ENCODE measurements at regions of chr1 and their contacts with region 1.

Region 1: DNA sequence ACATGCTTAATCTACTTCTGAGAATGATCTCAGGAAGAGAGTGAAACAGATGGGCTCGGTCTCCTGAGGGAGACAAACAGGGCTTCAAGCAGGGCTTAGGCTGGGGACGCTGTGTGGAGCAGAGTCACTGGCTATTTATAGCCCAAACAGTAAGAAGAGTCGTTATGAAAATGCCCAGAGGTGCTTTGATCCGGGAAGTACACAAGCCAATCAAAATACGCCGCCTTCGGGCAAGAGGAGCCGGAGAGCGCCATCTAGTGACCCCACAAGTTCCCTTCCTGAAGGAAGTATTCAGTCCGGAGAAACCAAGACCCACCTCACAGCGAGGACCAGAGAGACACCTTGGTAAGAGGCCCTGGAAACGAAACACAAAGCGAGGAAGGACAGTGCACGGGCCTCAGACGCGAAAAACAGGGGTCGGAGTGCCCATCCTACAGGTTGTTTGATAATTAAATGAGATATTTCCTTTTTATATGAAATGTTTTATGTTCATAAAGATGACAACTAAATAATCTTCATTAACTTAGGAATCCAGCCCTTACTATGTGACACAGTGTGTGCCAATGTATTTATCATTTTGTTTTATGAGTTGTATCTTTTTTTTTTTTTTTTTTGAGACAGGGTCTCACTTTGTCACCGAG is 25.0 kb upstream of the SCCPDH start:
- DNase-seq: peak; percentile 62
- ATAC-seq: peak; percentile 90
- H3K4me3 Mint-ChIP-seq: peak overlapping the region; percentile 74
- H3K27ac Mint-ChIP-seq: peak overlapping the region; percentile 57
- H3K4me1 Mint-ChIP-seq: peaks cover 8% of the 10 kb centered on the region
- H3K27me3 Mint-ChIP-seq: no peaks in the 10 kb centered on the region
- CTCF ChIP-seq: no peak

Region 2: GRCh38 chr1:246497331-246497915 is 201.8 kb before region 1 on chr1:
- CTCF ChIA-PET with region 1: interaction called, 8 read pairs
- POLR2A ChIA-PET with region 1: no interaction called
- intact Hi-C with region 1: loop called (anchors 1 kb)
- DNase-seq: no peak
- ATAC-seq: peak; percentile 86
- H3K4me3 Mint-ChIP-seq: no peak overlapping the region
- H3K27ac Mint-ChIP-seq: no peak overlapping the region
- H3K4me1 Mint-ChIP-seq: peaks cover 4% of the 10 kb centered on the region
- H3K27me3 Mint-ChIP-seq: no peaks in the 10 kb centered on the region
- CTCF ChIP-seq: peak; percentile 55

Region 3: DNA sequence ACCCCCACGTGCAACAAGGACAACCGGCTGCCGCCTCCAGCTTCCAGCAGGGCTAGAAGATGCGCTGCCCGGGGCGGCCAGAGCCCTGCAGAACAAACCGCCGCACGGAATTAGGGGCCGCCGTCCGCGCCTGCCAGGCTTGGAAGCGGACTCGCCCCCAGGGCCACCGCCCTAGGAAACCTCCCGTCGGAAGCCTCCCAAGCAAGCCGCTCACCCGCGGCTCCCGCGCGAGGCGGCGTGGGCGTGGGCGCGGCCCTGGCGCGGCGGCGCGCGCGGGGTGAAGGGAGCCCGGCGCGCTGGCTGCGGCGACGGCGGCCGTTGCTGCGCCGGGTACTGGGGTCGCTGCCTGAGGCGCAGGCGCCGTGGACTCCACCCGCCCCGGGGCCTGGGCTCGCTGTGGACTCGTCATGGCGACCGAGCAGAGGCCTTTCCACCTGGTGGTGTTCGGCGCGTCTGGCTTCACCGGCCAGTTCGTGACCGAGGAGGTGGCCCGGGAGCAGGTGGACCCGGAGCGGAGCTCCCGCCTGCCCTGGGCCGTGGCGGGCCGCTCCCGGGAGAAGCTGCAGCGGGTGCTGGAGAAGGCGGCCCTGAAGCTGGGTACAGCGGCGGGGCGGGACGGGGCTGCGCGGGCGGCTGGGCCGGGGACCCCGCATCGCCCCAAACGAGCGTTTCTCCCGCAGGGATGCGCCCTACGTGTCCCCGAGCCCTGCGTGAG is 25.0 kb after region 1 on chr1 and contains the start of gene SCCPDH:
- CTCF ChIA-PET with region 1: no interaction called
- POLR2A ChIA-PET with region 1: no interaction called
- intact Hi-C with region 1: loop called (anchors 2 kb)
- DNase-seq: peak; percentile 63
- ATAC-seq: peak; percentile 95
- H3K4me3 Mint-ChIP-seq: peak within 1 kb of the TSS; percentile 88
- H3K27ac Mint-ChIP-seq: peak within 1 kb of the TSS; percentile 30
- H3K4me1 Mint-ChIP-seq: peaks cover 14% of the 10 kb centered on the region
- H3K27me3 Mint-ChIP-seq: no peaks in the 10 kb centered on the region
- CTCF ChIP-seq: no peak
- total RNA-seq, gene SCCPDH: 8.1 and 9.3 TPM in 2 replicates

Region 4: DNA sequence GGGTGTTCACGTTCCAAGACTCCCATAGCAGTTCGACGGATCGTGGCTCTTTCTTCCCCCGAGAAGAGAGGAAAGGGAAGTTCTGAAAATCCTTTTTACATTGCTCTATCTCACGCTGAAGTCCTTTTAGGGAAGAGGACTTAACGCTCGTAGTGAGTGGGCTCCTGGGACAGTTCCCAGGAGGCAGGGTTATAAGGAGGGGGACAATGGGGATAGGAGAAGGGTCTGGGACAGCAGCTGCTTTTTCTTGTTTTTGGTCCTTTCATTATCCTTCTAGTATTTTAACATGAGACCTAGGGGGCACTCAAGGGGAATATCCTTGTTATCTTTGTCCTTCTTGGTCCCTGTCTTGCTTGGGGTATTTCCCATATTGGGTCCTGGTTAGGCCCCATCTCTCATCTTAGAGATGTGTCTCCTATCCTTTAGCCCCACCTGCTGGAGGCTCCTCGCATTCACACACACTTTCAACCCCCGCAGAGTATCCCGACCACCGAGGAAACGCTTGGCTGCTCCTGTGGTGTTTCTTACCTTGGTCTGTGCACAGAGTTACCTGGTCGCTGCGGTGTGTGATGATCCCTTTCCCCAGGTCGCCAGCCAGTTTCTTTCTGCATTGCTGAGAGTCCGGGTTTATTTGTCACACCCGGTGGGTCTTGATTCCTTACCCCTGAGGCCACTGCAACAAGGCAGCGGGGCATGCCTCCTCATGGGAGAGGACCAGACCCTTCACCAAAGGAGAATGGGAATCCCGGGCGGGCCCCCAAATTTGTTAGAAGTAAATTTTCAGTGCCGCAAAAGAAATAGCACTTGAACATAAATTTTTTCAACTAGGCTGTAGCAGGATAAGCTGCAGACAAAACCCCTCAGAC is 54.7 kb after region 1 on chr1:
- CTCF ChIA-PET with region 1: no interaction called
- POLR2A ChIA-PET with region 1: no interaction called
- intact Hi-C with region 1: no loop called
- DNase-seq: peak; percentile 34
- ATAC-seq: peak; percentile 93
- H3K4me3 Mint-ChIP-seq: no peak overlapping the region
- H3K27ac Mint-ChIP-seq: no peak overlapping the region
- H3K4me1 Mint-ChIP-seq: peaks cover 4% of the 10 kb centered on the region
- H3K27me3 Mint-ChIP-seq: no peaks in the 10 kb centered on the region
- CTCF ChIP-seq: no peak

Region 5: DNA sequence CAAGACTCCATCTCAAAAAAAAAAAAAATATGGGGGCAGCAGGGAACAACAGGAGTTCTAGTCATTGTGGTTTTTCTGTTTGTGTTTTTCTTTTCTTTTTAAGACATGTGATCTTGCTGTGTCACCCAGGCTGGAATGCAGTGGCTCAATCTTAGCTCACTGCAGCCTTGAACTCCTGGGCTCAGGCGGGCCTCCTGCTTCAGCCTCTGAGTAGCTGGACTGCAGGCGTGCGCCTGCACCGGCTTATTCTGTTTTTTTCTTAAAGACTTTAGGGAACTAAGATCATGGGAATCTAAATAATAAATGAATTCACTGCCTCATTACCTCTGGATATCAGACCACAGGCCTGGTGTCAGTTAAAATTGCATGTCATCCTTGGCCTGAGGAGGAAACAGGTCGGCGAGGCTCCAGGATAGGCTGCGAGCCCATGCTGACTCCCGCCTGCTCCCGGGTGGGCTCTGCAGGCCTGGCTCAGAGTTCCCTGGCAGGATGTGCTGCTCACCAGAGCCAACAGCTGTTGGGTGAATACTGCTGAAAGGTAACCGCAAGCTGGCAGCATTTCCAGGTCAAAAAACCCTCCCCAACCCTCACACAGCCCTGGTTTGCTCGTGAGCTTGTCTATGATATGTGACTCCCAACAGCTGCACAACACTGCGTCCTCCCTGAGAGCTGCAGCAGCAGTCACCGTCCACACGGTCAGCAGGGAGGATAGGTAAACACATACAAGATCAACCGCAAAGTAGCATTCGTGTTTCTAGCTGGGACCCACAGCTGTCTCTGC is 83.1 kb after region 1 on chr1:
- CTCF ChIA-PET with region 1: no interaction called
- POLR2A ChIA-PET with region 1: no interaction called
- intact Hi-C with region 1: no loop called
- DNase-seq: no peak
- ATAC-seq: no peak
- H3K4me3 Mint-ChIP-seq: no peak overlapping the region
- H3K27ac Mint-ChIP-seq: no peak overlapping the region
- H3K4me1 Mint-ChIP-seq: peaks cover 17% of the 10 kb centered on the region
- H3K27me3 Mint-ChIP-seq: peaks cover 6% of the 10 kb centered on the region
- CTCF ChIP-seq: no peak

Measured in activated B cell treated with CpG ODN at 0.5 μM for 24 hours (primary cell).